Left cardiac atrium (tissue), 4 donors: ENCODE measurements at regions of chr11 and their contacts with region 1.

Region 1: DNA sequence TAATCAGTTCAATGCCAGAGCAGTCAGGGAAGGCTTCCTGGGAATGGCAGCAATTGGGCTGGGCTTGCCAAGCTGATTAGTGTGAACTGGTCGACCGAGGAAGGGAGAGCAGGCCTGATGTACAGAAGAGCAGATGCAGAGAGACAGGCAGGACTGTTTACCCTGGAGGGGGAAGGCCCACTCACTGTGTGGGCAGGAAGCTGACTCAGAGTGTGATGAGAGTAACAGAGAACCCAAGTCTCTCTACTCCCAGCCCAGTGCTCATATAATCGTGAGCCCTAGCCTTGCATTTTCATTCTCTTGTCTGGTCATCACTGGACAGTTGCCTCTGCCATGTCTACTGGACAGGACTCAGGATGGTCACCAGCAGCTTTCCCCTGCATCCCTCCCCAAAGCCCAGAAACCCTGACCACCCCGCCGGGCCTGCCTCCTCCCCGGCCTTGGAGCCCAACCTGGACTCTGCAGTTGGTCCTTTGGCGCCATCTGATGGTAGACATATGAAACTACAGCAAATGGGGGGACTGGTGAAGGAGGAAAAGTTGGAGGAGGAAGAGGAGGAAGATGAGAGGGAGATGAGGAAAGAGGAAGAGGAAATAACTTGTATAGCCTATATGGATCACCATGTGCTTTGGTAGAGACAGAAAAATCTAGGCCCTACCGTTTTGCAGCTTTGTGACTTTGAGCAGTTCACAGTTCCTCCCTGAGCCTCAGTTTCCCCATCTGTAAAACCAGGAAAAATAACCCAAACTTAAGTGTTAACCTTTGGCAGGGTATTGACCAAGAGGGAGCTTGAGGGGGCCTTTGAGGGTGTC is 43.4 kb upstream of the PRDM11 start:
- DNase-seq: peak; percentile 64
- ATAC-seq: peak; percentile 60 to 63

Region 2: GRCh38 chr11:44927174-44927661 is 175.8 kb before region 1 on chr11:
- intact Hi-C with region 1: loop called in 1 of 2 experiments (anchors 2 kb)
- DNase-seq: peak; percentile 75
- ATAC-seq: peak; percentile 31 to 52

Region 3: GRCh38 chr11:44936525-44936924 is 166.5 kb before region 1 on chr11:
- intact Hi-C with region 1: loop called (anchors 2 kb)
- DNase-seq: peak; percentile 84
- ATAC-seq: peak; percentile 42 to 50

Region 4: GRCh38 chr11:45332276-45332934 is 229.4 kb after region 1 on chr11:
- intact Hi-C with region 1: loop called in 1 of 2 experiments (anchors 5 kb)
- DNase-seq: no peak
- ATAC-seq: peak; percentile 75 to 76

Region 5: DNA sequence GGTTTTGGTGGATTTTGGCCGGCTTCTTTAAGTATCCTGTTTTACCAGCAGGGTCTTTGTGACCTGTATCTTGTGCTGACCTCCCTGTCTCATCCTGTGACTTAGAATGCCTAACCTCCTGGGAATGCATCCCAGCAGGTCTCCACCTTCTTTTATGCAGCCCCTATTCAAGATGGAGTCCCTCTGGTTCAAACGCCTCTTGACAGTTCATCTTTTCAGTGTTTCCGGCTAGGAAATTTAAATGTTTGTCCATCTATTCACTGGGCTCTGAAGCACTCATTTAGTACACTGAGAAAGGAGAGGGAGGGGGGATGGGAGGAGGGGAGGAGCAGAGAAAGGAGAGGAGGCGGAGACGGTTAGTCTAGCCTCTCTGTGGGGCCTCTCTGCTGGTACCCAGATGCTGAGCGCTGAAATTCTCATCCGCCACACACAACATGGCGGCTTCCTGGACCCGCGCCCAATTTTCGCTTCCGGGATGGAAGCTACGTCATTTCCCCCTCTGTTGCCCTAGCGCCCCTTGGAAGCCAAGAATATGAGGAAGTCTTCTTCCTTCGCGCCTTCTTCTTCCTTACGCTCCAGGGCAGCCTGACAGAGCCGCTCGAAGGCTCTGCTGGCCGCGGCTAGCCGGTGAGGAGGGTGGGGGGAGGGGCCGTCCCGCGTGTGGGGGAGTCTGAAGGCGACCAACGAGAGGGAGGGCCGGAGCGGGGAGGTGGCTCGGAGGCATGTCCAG is 252.1 kb after region 1 on chr11:
- intact Hi-C with region 1: no loop called
- DNase-seq: peak; percentile 92
- ATAC-seq: peak; percentile 95 to 96